ENCODE measurements at regions of chr9 and their contacts with region 1.

Region 1: DNA sequence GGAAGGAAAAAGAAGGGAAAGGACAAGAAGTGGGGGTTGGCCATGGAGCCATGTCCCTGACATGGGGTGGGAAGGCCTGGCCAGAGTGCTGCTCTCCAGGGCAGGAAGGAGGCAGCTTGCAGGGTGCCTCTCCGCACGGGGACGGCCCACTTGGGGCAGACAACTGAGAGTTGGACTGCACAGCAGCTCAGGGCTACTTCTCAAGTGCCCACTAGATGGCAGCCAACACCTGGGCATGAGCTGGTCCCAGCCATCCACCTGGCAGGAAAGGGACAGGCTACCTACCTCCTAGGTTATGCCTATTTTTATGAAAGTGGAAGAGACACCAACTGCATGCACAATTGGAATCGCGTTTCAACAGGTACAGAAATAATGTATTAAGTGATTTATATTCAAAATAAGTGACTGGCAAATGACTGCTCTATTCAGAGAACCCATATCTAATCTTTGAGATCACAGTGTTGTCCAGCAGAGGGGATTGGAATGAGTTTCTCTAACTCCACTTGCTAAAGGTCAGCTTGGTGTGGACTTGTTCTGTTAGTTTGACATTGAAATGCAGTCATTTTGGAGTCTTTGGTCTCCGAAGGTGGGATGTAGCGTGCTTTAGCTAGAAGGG is 113.4 kb downstream of the SYK start:
- DNase-seq: peak; percentile 81
- H3K4me3 Mint-ChIP-seq: no peak overlapping the region
- H3K27ac Mint-ChIP-seq: no peak overlapping the region
- H3K4me1 Mint-ChIP-seq: no peaks in the 10 kb centered on the region
- H3K27me3 Mint-ChIP-seq: no peaks in the 10 kb centered on the region

Region 2: GRCh38 chr9:91036826-91037510 is 122.0 kb after region 1 on chr9:
- CTCF ChIA-PET with region 1: interaction called, 32 read pairs
- DNase-seq: peak; percentile 86
- H3K4me3 Mint-ChIP-seq: no peak overlapping the region
- H3K27ac Mint-ChIP-seq: peak overlapping the region; percentile 44
- H3K4me1 Mint-ChIP-seq: peaks cover 57% of the 10 kb centered on the region
- H3K27me3 Mint-ChIP-seq: peaks cover 53% of the 10 kb centered on the region

Region 3: GRCh38 chr9:91422758-91423711 is 508.1 kb after region 1 on chr9:
- CTCF ChIA-PET with region 1: interaction called, 81 read pairs
- DNase-seq: peak; percentile 76
- H3K4me3 Mint-ChIP-seq: peak overlapping the region; percentile 92
- H3K27ac Mint-ChIP-seq: peak overlapping the region; percentile 90
- H3K4me1 Mint-ChIP-seq: peaks cover 64% of the 10 kb centered on the region
- H3K27me3 Mint-ChIP-seq: peaks cover 52% of the 10 kb centered on the region

Region 4: GRCh38 chr9:91433180-91433579 is 518.2 kb after region 1 on chr9:
- CTCF ChIA-PET with region 1: interaction called, 77 read pairs
- DNase-seq: no peak
- H3K4me3 Mint-ChIP-seq: no peak overlapping the region
- H3K27ac Mint-ChIP-seq: no peak overlapping the region
- H3K4me1 Mint-ChIP-seq: peaks cover 4% of the 10 kb centered on the region
- H3K27me3 Mint-ChIP-seq: peaks cover 48% of the 10 kb centered on the region

Region 5: GRCh38 chr9:91681461-91682305 is 766.7 kb after region 1 on chr9:
- CTCF ChIA-PET with region 1: interaction called, 12 read pairs
- DNase-seq: peak; percentile 77
- H3K4me3 Mint-ChIP-seq: no peak overlapping the region
- H3K27ac Mint-ChIP-seq: no peak overlapping the region
- H3K4me1 Mint-ChIP-seq: peaks cover 4% of the 10 kb centered on the region
- H3K27me3 Mint-ChIP-seq: peaks cover 31% of the 10 kb centered on the region

Region 6: DNA sequence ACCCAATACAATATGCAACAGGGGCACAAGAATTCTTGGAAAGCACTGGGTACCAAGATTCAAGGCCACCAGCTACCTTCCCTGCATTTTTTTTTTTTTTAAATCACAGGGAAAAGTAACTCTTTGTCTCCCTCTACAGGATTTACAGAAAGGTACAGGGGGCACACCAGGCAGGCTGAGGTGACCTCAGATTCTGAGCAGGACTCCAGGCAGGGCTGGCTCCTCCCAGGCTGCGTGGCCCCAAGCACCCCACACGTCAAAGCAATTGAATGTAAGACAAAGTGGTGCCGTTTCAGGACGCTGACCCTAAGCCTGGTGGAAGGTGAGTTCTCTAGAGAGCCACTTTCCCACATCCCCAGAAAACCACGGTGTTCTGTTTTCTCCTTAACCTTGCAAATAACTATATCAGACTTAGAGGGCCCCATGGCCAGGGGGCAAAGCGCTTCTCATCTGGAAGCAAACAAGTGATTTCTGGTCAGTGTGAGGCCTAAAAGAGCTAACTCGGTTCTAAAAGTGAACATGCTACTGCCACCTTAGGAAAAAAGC is 812.4 kb after region 1 on chr9:
- CTCF ChIA-PET with region 1: interaction called, 42 read pairs
- DNase-seq: peak; percentile 39
- H3K4me3 Mint-ChIP-seq: no peak overlapping the region
- H3K27ac Mint-ChIP-seq: no peak overlapping the region
- H3K4me1 Mint-ChIP-seq: no peaks in the 10 kb centered on the region
- H3K27me3 Mint-ChIP-seq: peaks cover 22% of the 10 kb centered on the region

Region 7: DNA sequence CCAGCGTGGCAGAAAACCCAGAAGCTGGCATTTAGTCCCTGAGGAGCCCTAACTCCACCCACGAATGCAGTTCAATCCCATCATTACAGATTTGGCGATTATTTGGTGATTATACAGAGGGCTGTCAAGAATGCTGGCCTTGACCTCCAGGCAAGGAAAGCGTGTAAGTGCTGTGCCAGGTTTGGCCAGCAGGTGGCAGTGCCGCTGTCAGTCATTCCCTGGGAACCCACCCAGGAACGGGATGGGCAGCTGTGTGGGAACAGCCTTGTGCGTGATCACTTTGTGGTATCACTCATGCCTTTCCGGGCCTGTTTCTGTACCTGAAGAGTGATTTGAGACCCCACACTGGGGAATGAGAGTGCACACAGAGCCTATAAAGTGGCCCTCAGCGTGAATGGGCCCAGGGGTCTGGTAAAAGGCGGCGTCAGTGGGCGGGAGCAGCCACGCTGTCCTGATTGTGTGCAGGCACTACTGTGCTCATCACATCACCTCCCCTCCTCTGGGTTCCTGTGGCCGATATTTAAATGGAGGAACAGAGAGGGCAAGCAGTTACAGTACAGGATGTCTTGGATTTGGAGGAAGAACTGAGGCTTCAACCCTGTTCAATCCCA is 819.5 kb after region 1 on chr9:
- CTCF ChIA-PET with region 1: interaction called, 42 read pairs
- DNase-seq: peak; percentile 65
- H3K4me3 Mint-ChIP-seq: no peak overlapping the region
- H3K27ac Mint-ChIP-seq: no peak overlapping the region
- H3K4me1 Mint-ChIP-seq: no peaks in the 10 kb centered on the region
- H3K27me3 Mint-ChIP-seq: peaks cover 20% of the 10 kb centered on the region

Measured in activated naive CD4-positive, alpha-beta T cell treated with anti-CD3 and anti-CD28 coated beads, Interleukin-2, amount 10 ng/mL, durations not matched to agents 7 days and 5 days (primary cell).